ENCODE measurements at regions of chr20 and their contacts with region 1.

Region 1: GRCh38 chr20:13105864-13106457 is 97.2 kb downstream of the SPTLC3 start:
- DNase-seq: no peak
- ATAC-seq: peak; percentile 38

Region 2: DNA sequence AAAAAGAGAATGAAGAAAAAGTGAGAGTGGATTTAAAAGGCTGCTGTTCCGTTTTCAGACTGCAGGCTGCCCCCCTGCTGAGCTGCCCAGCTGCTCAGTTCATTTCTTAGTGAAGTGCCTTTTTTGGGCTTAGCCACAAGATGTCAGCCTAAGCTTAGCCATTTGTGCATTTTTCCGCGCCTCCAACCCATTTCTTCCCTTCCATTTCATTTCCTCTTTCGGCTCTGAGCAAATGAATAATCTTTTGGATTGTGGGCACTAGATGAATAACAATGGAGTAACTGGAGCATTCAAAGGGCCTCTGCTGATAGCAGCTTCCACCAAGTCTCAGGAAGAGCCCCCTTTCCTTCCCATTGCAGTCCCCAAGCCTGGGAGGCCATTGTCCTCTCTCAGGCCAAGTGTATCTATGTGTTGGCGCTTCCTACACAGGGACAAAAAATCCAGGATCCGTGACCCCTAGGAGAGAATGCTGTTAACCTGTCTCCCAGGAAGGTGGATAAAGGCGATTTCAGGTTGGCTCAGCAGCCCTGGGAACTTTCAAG is 180.7 kb before region 1 on chr20:
- intact Hi-C with region 1: loop called (anchors 5 kb)
- DNase-seq: no peak
- ATAC-seq: peak; percentile 95

Region 3: GRCh38 chr20:12966468-12967341 is 139.3 kb before region 1 on chr20:
- intact Hi-C with region 1: loop called (anchors 5 kb)
- DNase-seq: no peak
- ATAC-seq: no peak

Region 4: DNA sequence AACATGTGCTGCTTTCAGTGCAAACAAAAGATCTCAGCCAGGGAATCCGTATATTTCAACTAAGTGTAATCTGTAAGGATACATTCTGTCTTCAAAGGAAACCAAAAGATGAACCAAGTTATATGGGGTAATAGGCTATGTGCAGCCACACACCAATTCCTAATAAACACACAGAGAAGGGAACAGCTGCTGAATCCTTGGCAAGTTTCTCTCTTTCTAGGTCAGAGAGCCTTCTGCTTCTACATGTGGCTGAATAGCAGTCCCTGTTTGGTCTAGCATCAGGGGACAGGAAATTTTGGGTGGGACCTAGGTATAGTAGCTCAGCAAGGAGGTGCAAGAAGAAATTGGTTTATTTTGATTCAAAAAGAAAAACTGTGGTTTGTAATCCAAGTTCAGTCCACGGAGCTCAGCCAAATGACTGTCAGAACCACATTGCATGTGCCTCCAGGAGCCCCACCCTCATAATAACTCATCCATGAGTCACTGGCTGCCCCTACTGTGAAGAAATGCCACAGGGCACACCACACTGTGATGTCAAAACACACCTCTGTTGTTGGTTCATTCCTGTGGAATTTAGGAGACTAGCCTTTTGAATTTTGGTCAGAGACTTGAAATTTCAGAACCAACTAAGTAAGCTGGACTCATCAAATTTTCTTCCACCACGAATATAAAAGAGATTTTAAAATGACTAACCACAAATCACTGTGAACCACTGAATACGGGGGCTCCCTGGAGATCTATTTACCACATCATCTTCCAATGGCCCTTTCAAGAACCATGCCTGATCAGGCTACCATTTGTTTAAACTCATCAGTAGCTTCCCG is 76.1 kb before region 1 on chr20:
- intact Hi-C with region 1: loop called (anchors 10 kb)
- DNase-seq: no peak
- ATAC-seq: no peak

Measured in Right ventricle myocardium superior (tissue), 1 donor.